Prostate gland (tissue), 2 donors: ENCODE measurements at regions of chr6 and their contacts with region 1.

Region 1: DNA sequence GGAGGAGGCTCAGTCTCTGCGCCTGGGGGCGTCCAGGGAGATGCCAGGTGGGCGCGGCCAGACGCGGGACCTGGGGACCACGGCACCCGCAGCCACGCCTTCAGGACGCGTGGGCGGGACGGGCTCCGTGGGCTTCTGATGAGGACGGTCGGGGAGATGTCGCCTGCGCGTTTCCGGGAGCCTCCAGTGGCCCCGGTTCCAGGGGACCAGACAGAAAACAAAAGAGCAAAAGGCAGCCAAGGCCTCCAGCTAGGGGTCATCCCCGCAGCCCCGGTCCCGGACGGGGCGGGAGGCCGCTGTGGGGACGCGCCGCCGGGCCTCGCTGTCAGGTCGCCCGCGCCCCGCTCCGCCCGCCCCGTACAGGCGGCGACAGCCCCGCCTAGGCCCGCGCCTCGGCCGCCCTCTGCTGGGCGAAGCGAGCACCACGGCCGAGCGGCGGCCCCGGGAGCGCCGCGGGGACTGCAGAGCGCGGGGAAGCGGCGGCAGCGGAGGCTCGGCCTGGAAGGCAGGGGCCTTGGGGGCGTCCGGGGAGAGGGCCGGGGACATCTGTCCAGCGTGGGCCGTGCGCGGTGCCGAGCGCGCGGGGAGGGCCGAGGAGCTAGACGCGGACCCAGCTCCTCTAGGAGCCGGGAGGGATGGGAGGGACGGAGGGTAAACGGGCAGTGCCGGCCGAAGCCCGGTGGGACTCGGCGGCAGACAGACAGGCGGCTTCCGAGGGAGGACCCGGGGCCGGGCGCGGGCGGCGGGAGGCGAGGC is 48.7 kb downstream of the TMEM242 start:
- DNase-seq: peak; percentile 54
- H3K4me3 ChIP-seq: peak overlapping the region; percentile 50 to 57
- H3K27ac ChIP-seq: peak overlapping the region; percentile 72 to 75
- H3K4me1 ChIP-seq: no peaks in the 10 kb centered on the region
- H3K27me3 ChIP-seq: no peaks in the 10 kb centered on the region
- CTCF ChIP-seq: peak; percentile 69 to 98 (median 92)
- POLR2A ChIP-seq: peak; percentile 9

Region 2: DNA sequence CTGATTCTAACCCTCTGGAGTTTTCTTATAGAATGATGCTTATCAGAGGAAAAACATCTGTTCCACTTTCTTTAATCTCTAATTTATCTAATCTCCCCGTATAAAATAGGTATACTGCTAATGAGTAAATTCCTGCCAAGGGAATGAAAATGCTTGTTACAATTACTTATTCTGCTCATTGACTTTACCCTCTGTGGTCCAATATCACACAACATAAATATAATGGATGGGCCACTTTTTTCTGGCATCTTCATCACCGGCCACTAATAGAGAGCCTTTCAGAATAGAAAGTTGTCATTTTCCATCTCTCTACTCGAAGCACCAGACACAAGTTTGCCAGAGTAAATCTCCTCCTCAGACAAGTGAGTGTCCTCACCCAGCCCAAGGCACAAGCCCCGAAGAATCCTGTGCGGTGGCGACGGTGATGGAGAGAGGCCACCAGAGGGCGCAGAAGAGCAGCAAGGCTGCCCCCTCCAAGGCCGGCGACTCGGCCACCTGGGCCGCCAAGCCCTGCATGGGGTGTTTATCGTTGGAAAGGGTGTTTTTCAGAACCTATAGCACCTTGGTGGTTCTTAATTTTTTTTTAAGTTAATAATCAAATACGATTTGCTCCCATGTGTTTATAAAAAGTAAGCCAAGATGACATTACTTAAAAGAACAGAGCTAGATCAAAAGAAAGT is 710.4 kb before region 1 on chr6:
- intact Hi-C with region 1: loop called (anchors 10 kb)
- DNase-seq: peak; percentile 78
- H3K4me3 ChIP-seq: no peak overlapping the region
- H3K27ac ChIP-seq: no peak overlapping the region
- H3K4me1 ChIP-seq: no peaks in the 10 kb centered on the region
- H3K27me3 ChIP-seq: no peaks in the 10 kb centered on the region
- CTCF ChIP-seq: peak; percentile 87 to 93 (median 90)
- POLR2A ChIP-seq: no peak

Region 3: GRCh38 chr6:157034436-157035230 is 240.0 kb before region 1 on chr6:
- intact Hi-C with region 1: loop called (anchors 5 kb)
- DNase-seq: no peak
- H3K4me3 ChIP-seq: no peak overlapping the region
- H3K27ac ChIP-seq: peak overlapping the region in 1 of 2 donors; percentile 61
- H3K4me1 ChIP-seq: peaks cover 8% of the 10 kb centered on the region
- H3K27me3 ChIP-seq: no peaks in the 10 kb centered on the region
- CTCF ChIP-seq: peak in 3 of 4 experiments; percentile 39 to 74 (median 72)
- POLR2A ChIP-seq: no peak

Region 4: GRCh38 chr6:157235600-157236039 is 39.0 kb before region 1 on chr6:
- intact Hi-C with region 1: loop called (anchors 2 kb)
- DNase-seq: no peak
- H3K4me3 ChIP-seq: peak overlapping the region; percentile 37 to 49
- H3K27ac ChIP-seq: peak overlapping the region; percentile 51 to 68
- H3K4me1 ChIP-seq: no peaks in the 10 kb centered on the region
- H3K27me3 ChIP-seq: no peaks in the 10 kb centered on the region
- CTCF ChIP-seq: peak in 2 of 4 experiments; percentile 66
- POLR2A ChIP-seq: no peak